CD4-positive, alpha-beta T cell (primary cell): ENCODE measurements at regions of chr13 and their contacts with region 1.

Region 1: DNA sequence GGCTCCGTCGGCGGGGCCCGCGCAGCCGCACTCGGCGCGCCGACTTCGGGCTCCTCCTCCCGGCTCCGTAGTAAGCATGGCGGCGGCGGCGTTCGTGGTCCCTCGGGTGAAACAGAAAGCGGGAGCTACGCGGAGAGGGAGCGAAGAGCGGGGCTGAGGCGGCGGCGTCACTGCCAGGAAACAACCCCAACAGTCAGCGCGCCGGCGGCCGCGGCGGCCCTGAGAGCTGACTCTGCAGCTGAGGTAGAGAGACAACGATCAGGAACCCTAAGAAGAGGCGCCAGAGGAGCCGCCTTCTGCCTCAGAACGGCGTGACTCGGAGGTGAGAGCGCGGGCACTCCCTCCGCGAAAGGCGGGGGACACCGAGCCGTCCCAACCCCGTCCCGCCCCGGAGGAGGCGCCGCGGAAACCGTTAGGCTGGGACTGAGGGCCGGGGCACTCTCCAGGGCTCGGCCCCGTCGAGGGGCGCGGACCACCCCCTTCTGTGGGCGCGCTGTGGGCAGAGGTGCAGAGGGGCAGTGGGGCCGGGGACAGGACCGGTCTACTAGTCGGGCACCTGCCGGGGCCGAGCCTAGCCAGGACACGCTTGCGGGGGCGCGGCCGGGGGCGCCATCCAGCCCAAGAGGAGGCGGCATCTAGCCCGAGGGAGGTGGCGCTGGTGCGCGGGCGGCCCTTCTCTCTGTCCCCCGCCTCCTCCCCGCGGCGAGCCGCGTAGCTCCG is at the start of gene FNDC3A:
- DNase-seq: peak; percentile 74 to 94 (median 82)
- ATAC-seq: peak; percentile 68
- H3K4me3 ChIP-seq: peak within 1 kb of the TSS; percentile 80
- H3K4me3 Mint-ChIP-seq: peak within 1 kb of the TSS; percentile 99
- H3K27ac ChIP-seq: peak within 1 kb of the TSS; percentile 95 to 97
- H3K27ac Mint-ChIP-seq: peak within 1 kb of the TSS; percentile 98
- H3K4me1 ChIP-seq: peaks cover 9% of the 10 kb centered on the region
- H3K4me1 Mint-ChIP-seq: peaks cover 54% of the 10 kb centered on the region
- H3K27me3 ChIP-seq: no peaks in the 10 kb centered on the region
- H3K27me3 Mint-ChIP-seq: no peaks in the 10 kb centered on the region
- CTCF ChIP-seq: no peak
- total RNA-seq, gene FNDC3A: 27.7 to 28.6 TPM

Region 2: GRCh38 chr13:48037346-48038173 is 938.5 kb before region 1 on chr13 and contains the start of gene NUDT15:
- CTCF ChIA-PET with region 1: no interaction called
- POLR2A ChIA-PET with region 1: interaction called, 10 read pairs
- intact Hi-C with region 1: loop called in 1 of 2 experiments (anchors 2 kb)
- DNase-seq: peak; percentile 90 to 99 (median 96)
- ATAC-seq: peak; percentile 90
- H3K4me3 ChIP-seq: peak within 1 kb of the TSS; percentile 68
- H3K4me3 Mint-ChIP-seq: peak within 1 kb of the TSS; percentile 94
- H3K27ac ChIP-seq: peak within 1 kb of the TSS; percentile 79 to 98
- H3K27ac Mint-ChIP-seq: peak within 1 kb of the TSS; percentile 97
- H3K4me1 ChIP-seq: peaks cover 18% of the 10 kb centered on the region
- H3K4me1 Mint-ChIP-seq: peaks cover 42% of the 10 kb centered on the region
- H3K27me3 ChIP-seq: no peaks in the 10 kb centered on the region
- H3K27me3 Mint-ChIP-seq: no peaks in the 10 kb centered on the region
- CTCF ChIP-seq: peak; percentile 100
- total RNA-seq, gene NUDT15: 14.4 to 16.2 TPM

Region 3: GRCh38 chr13:48965736-48966135 is 10.3 kb before region 1 on chr13:
- CTCF ChIA-PET with region 1: no interaction called
- POLR2A ChIA-PET with region 1: interaction called, 10 read pairs
- intact Hi-C with region 1: no loop called
- DNase-seq: no peak
- ATAC-seq: no peak
- H3K4me3 ChIP-seq: no peak overlapping the region
- H3K4me3 Mint-ChIP-seq: no peak overlapping the region
- H3K27ac ChIP-seq: no peak overlapping the region
- H3K27ac Mint-ChIP-seq: no peak overlapping the region
- H3K4me1 ChIP-seq: no peaks in the 10 kb centered on the region
- H3K4me1 Mint-ChIP-seq: no peaks in the 10 kb centered on the region
- H3K27me3 ChIP-seq: no peaks in the 10 kb centered on the region
- H3K27me3 Mint-ChIP-seq: no peaks in the 10 kb centered on the region
- CTCF ChIP-seq: no peak

Region 4: DNA sequence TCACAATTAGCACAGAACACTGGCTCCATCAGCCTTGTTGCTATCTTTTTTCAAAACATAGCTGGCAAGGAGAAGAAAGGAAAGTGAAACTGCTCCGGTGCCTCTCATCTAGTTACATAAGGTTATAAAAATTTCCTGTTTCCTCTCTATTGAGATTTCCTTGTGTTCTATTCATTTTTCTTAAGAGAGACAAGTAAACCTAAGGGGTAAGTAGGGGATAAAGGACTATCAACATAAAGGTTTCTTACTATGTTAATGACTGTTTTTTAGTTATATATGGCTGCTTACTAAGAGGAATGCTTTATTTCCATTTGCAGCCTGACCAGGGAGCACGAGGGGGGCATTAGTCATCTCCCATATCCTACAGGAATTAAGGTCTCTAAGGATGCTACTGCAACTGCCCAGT is 170.9 kb after region 1 on chr13:
- CTCF ChIA-PET with region 1: interaction called, 5 read pairs
- POLR2A ChIA-PET with region 1: interaction called, 19 read pairs
- intact Hi-C with region 1: loop called in 1 of 2 experiments (anchors 2 kb)
- DNase-seq: peak in 4 of 14 experiments; percentile 26 to 78 (median 70)
- ATAC-seq: peak; percentile 88
- H3K4me3 ChIP-seq: peak overlapping the region; percentile 51
- H3K4me3 Mint-ChIP-seq: peak overlapping the region; percentile 87
- H3K27ac ChIP-seq: peak overlapping the region; percentile 64 to 82
- H3K27ac Mint-ChIP-seq: peak overlapping the region; percentile 90
- H3K4me1 ChIP-seq: peaks cover 9% of the 10 kb centered on the region
- H3K4me1 Mint-ChIP-seq: peaks cover 61% of the 10 kb centered on the region
- H3K27me3 ChIP-seq: no peaks in the 10 kb centered on the region
- H3K27me3 Mint-ChIP-seq: no peaks in the 10 kb centered on the region
- CTCF ChIP-seq: no peak

Region 5: GRCh38 chr13:49711218-49711863 is 735.3 kb after region 1 on chr13:
- CTCF ChIA-PET with region 1: no interaction called
- POLR2A ChIA-PET with region 1: no interaction called
- intact Hi-C with region 1: no loop called
- DNase-seq: no peak
- ATAC-seq: no peak
- H3K4me3 ChIP-seq: no peak overlapping the region
- H3K4me3 Mint-ChIP-seq: no peak overlapping the region
- H3K27ac ChIP-seq: no peak overlapping the region
- H3K27ac Mint-ChIP-seq: no peak overlapping the region
- H3K4me1 ChIP-seq: no peaks in the 10 kb centered on the region
- H3K4me1 Mint-ChIP-seq: no peaks in the 10 kb centered on the region
- H3K27me3 ChIP-seq: no peaks in the 10 kb centered on the region
- H3K27me3 Mint-ChIP-seq: no peaks in the 10 kb centered on the region
- CTCF ChIP-seq: no peak

Region 6: DNA sequence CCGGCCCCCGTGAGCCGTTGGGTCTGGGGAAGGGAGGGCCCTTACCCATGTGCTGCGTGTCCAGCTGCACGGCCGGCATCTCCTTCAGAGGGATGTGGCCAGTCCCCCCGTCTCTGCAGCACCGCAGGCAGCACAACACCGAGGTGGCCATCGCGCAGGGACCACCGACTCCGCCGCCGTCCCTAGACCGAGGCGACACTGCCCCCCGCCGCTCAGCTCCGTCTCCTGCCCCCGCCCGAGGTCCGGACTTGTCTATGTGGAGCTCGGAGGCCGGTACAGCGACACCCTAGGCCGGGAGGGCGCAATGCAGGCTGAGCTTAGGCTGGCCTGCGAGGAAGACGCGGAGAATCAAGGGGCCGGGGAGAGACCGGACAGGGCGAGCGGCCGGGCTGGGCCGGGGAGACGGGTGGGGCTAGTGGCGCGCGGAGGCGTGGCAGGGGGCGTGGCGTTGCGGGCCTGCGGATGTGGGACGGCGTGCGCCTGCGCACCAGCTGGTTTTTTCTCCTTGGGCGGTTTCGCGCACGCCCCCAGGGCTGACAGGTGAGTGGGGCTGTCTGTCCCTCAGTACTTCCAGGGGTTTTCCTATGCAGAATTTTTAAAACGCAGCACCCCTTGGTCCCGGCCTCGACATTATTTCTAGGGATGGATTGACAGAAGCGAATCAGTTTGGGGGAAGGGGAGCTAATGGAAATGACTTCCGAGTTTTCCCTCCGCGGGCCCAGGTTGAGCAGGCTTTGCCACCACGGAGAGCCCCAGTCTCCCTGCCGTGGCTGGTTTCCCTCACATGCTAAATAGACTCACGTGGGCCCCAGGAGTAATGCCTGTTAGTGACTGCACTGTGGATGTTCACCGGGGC is 960.3 kb after region 1 on chr13 and contains the start of gene SPRYD7:
- CTCF ChIA-PET with region 1: no interaction called
- POLR2A ChIA-PET with region 1: interaction called, 5 read pairs
- intact Hi-C with region 1: loop called in 1 of 2 experiments (anchors 10 kb)
- DNase-seq: peak; percentile 86 to 97 (median 92)
- ATAC-seq: peak; percentile 82
- H3K4me3 ChIP-seq: peak within 1 kb of the TSS; percentile 91
- H3K4me3 Mint-ChIP-seq: peak within 1 kb of the TSS; percentile 98
- H3K27ac ChIP-seq: no peak within 1 kb of the TSS
- H3K27ac Mint-ChIP-seq: peak within 1 kb of the TSS; percentile 83
- H3K4me1 ChIP-seq: peaks cover 18% of the 10 kb centered on the region
- H3K4me1 Mint-ChIP-seq: peaks cover 19% of the 10 kb centered on the region
- H3K27me3 ChIP-seq: no peaks in the 10 kb centered on the region
- H3K27me3 Mint-ChIP-seq: no peaks in the 10 kb centered on the region
- CTCF ChIP-seq: peak; percentile 74
- total RNA-seq, gene SPRYD7: 1.1 to 1.5 TPM